ENCODE measurements at regions of chr18 and their contacts with region 1.

Region 1: DNA sequence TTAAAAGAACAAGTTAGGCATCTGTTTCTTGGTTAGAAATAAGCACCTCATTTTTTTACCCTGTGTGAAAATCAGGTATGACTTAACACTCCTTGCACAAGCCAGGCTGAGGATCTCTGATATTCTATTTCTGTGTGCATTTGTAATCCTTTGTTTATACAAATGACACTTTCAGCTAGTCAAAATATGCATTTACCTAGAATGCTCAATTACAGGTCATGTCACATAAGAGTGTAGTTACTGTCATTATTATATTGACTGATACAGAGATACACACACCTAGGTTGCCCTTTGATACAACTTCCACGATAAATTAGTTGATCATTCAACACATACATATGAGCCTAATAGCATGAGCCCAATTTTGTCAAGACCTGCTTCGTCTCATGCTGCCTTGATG is 144.3 kb downstream of the CHST9 start:
- DNase-seq: no peak
- ATAC-seq: no peak
- H3K4me3 ChIP-seq: no peak overlapping the region
- H3K27ac ChIP-seq: no peak overlapping the region
- H3K4me1 ChIP-seq: peaks cover 33% of the 10 kb centered on the region
- H3K27me3 ChIP-seq: no peaks in the 10 kb centered on the region
- CTCF ChIP-seq: no peak
- EP300 ChIP-seq: no peak
- POLR2A ChIP-seq: no peak
- RAD21 ChIP-seq: no peak

Region 2: GRCh38 chr18:27057519-27058234 is 16.9 kb after region 1 on chr18:
- CTCF ChIA-PET with region 1: no interaction called
- POLR2A ChIA-PET with region 1: no interaction called
- in situ Hi-C with region 1: no loop called
- intact Hi-C with region 1: loop called (anchors 2 kb)
- DNase-seq: peak; percentile 65
- ATAC-seq: peak; percentile 90
- H3K4me3 ChIP-seq: no peak overlapping the region
- H3K27ac ChIP-seq: no peak overlapping the region
- H3K4me1 ChIP-seq: peaks cover 34% of the 10 kb centered on the region
- H3K27me3 ChIP-seq: no peaks in the 10 kb centered on the region
- CTCF ChIP-seq: no peak
- EP300 ChIP-seq: no peak
- POLR2A ChIP-seq: no peak
- RAD21 ChIP-seq: no peak

Region 3: DNA sequence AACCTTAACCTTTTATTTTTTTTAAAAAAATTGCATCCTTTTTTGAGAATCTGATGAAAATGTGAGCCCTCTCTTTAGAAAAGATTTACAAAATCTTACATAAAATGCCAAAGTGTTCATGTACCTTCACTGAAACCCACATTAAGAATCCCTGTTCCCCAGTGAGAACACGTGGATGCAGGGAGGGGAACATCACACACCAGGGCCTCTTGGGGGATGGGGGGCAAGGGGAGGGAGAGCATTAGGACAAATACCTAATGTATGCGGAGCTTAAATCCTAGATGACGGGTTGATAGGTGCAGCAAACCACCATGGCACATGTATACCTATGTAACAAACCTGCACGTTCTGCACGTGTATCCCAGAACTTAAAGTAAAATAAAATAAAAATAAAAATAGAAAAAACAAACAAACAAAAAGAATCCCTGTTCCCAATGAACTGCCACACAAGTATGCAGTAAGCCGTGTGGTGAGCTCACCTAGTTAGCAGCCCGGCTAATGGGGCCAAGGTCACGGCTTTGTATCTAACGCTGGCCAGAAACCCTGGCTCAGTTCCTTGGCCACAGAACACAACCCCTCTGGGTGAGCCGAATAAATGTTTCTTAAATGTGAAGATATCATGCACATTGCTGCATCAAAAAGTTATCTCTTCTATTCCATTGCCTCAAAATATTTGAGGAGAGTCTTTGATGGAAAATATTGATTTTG is 102.9 kb after region 1 on chr18:
- CTCF ChIA-PET with region 1: no interaction called
- POLR2A ChIA-PET with region 1: no interaction called
- in situ Hi-C with region 1: no loop called
- intact Hi-C with region 1: loop called (anchors 5 kb)
- DNase-seq: peak; percentile 60
- ATAC-seq: peak; percentile 93
- H3K4me3 ChIP-seq: peak overlapping the region in 2 of 3 experiments; percentile 42 to 69; a peak in 4 of 6 replicates
- H3K27ac ChIP-seq: no peak overlapping the region
- H3K4me1 ChIP-seq: peaks cover 33% of the 10 kb centered on the region
- H3K27me3 ChIP-seq: no peaks in the 10 kb centered on the region
- CTCF ChIP-seq: no peak
- EP300 ChIP-seq: 0 out of 4 replicates have a peak, but pooled peaks of 1 of the 2 experiments have one; percentile 14
- POLR2A ChIP-seq: no peak
- RAD21 ChIP-seq: no peak

Region 4: GRCh38 chr18:27198036-27198435 is 157.2 kb after region 1 on chr18:
- CTCF ChIA-PET with region 1: no interaction called
- POLR2A ChIA-PET with region 1: no interaction called
- in situ Hi-C with region 1: no loop called
- intact Hi-C with region 1: no loop called
- DNase-seq: peak; percentile 66
- ATAC-seq: peak; percentile 90
- H3K4me3 ChIP-seq: no peak overlapping the region; a peak in 1 of 6 replicates
- H3K27ac ChIP-seq: no peak overlapping the region
- H3K4me1 ChIP-seq: peaks cover 17% of the 10 kb centered on the region
- H3K27me3 ChIP-seq: no peaks in the 10 kb centered on the region; a peak in 1 of 5 replicates
- CTCF ChIP-seq: no peak
- EP300 ChIP-seq: no peak
- POLR2A ChIP-seq: no peak
- RAD21 ChIP-seq: no peak